Caco-2 (cell line): ENCODE measurements at regions of chr11 and their contacts with region 1.

Region 1: DNA sequence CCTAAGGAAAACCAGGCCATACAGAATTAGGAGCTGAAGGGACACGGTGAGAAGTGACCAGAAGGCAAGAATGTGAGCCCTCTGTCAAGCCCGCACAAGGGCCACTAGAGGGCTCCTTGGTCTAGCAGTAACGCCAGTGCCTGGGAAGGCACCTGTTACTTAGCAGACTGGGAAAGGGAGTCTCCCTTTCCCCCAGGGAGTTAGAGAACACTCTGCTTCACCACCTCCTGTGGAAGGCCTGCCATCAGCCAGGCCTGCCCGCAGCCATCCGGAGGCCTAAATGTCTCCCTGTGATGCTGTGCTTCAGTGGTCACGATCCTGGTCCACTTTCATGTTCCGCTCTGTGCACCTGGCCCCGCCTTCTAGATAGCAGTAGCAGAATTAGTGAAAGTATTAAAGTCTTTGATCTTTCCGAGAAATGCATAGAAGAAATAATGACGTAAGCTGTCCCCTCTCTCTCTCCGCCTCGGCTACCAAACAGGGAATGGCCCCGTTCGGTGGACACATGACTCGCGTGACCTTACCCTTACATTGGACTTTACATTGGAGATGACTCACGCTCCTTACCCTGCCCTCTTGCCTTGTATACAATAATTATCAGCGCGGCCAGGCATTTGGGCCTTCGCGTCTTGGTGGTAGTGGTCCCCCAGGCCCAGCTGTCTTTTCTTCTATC is 10.7 kb upstream of the GSTP1 start:
- DNase-seq: peak; percentile 89 to 91
- H3K4me3 ChIP-seq: peak overlapping the region; percentile 28
- H3K4me3 Mint-ChIP-seq: peak overlapping the region; percentile 69
- H3K27ac Mint-ChIP-seq: peak overlapping the region; percentile 91
- H3K4me1 ChIP-seq: peaks cover 20% of the 10 kb centered on the region
- H3K4me1 Mint-ChIP-seq: peaks cover 30% of the 10 kb centered on the region
- H3K27me3 ChIP-seq: no peaks in the 10 kb centered on the region
- H3K27me3 Mint-ChIP-seq: no peaks in the 10 kb centered on the region
- CTCF ChIP-seq: peak; percentile 97

Region 2: GRCh38 chr11:67332081-67332691 is 240.7 kb before region 1 on chr11:
- CTCF ChIA-PET with region 1: no interaction called
- POLR2A ChIA-PET with region 1: no interaction called
- intact Hi-C with region 1: no loop called
- DNase-seq: no peak
- H3K4me3 ChIP-seq: no peak overlapping the region
- H3K4me3 Mint-ChIP-seq: no peak overlapping the region
- H3K27ac Mint-ChIP-seq: no peak overlapping the region
- H3K4me1 ChIP-seq: no peaks in the 10 kb centered on the region
- H3K4me1 Mint-ChIP-seq: no peaks in the 10 kb centered on the region
- H3K27me3 ChIP-seq: no peaks in the 10 kb centered on the region
- H3K27me3 Mint-ChIP-seq: no peaks in the 10 kb centered on the region
- CTCF ChIP-seq: no peak

Region 3: GRCh38 chr11:67523556-67524479 is 49.1 kb before region 1 on chr11:
- CTCF ChIA-PET with region 1: no interaction called
- POLR2A ChIA-PET with region 1: no interaction called
- intact Hi-C with region 1: no loop called
- DNase-seq: peak in 1 of 2 experiments; percentile 41
- H3K4me3 ChIP-seq: no peak overlapping the region
- H3K4me3 Mint-ChIP-seq: no peak overlapping the region
- H3K27ac Mint-ChIP-seq: no peak overlapping the region
- H3K4me1 ChIP-seq: no peaks in the 10 kb centered on the region
- H3K4me1 Mint-ChIP-seq: no peaks in the 10 kb centered on the region
- H3K27me3 ChIP-seq: no peaks in the 10 kb centered on the region
- H3K27me3 Mint-ChIP-seq: no peaks in the 10 kb centered on the region
- CTCF ChIP-seq: peak in 1 of 2 experiments; percentile 15

Region 4: DNA sequence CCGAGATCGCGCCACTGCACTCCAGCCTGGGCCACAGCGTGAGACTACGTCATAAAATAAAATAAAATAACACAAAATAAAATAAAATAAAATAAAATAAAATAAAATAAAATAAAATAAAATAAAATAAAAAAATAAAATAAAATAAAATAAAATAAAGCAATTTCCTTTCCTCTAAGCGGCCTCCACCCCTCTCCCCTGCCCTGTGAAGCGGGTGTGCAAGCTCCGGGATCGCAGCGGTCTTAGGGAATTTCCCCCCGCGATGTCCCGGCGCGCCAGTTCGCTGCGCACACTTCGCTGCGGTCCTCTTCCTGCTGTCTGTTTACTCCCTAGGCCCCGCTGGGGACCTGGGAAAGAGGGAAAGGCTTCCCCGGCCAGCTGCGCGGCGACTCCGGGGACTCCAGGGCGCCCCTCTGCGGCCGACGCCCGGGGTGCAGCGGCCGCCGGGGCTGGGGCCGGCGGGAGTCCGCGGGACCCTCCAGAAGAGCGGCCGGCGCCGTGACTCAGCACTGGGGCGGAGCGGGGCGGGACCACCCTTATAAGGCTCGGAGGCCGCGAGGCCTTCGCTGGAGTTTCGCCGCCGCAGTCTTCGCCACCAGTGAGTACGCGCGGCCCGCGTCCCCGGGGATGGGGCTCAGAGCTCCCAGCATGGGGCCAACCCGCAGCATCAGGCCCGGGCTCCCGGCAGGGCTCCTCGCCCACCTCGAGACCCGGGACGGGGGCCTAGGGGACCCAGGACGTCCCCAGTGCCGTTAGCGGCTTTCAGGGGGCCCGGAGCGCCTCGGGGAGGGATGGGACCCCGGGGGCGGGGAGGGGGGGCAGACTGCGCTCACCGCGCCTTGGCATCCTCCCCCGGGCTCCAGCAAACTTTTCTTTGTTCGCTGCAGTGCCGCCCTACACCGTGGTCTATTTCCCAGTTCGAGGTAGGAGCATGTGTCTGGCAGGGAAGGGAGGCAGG is 10.6 kb after region 1 on chr11 and contains the start of gene GSTP1:
- CTCF ChIA-PET with region 1: interaction called, 35 read pairs
- POLR2A ChIA-PET with region 1: interaction called, 16 read pairs
- intact Hi-C with region 1: loop called (anchors 1 kb)
- DNase-seq: peak; percentile 93 to 98
- H3K4me3 ChIP-seq: peak within 1 kb of the TSS; percentile 87
- H3K4me3 Mint-ChIP-seq: peak within 1 kb of the TSS; percentile 75
- H3K27ac Mint-ChIP-seq: peak within 1 kb of the TSS; percentile 85
- H3K4me1 ChIP-seq: peaks cover 48% of the 10 kb centered on the region
- H3K4me1 Mint-ChIP-seq: peaks cover 61% of the 10 kb centered on the region
- H3K27me3 ChIP-seq: no peaks in the 10 kb centered on the region
- H3K27me3 Mint-ChIP-seq: no peaks in the 10 kb centered on the region
- CTCF ChIP-seq: peak; percentile 62 to 93
- total RNA-seq, gene GSTP1: 1,799 and 1,911 TPM in 2 replicates

Region 5: GRCh38 chr11:67606492-67607201 is 33.8 kb after region 1 on chr11 and contains the start of gene NDUFV1:
- CTCF ChIA-PET with region 1: interaction called, 3 read pairs
- POLR2A ChIA-PET with region 1: no interaction called
- intact Hi-C with region 1: loop called (anchors 1 kb)
- DNase-seq: peak; percentile 98 to 100
- H3K4me3 ChIP-seq: peak within 1 kb of the TSS; percentile 80
- H3K4me3 Mint-ChIP-seq: peak within 1 kb of the TSS; percentile 82
- H3K27ac Mint-ChIP-seq: peak within 1 kb of the TSS; percentile 91
- H3K4me1 ChIP-seq: peaks cover 10% of the 10 kb centered on the region; the same call in 1 of the 2 replicates
- H3K4me1 Mint-ChIP-seq: no peaks in the 10 kb centered on the region
- H3K27me3 ChIP-seq: no peaks in the 10 kb centered on the region
- H3K27me3 Mint-ChIP-seq: no peaks in the 10 kb centered on the region
- CTCF ChIP-seq: peak; percentile 86 to 88
- total RNA-seq, gene NDUFV1: 358 and 375 TPM in 2 replicates

Region 6: GRCh38 chr11:67613960-67614715 is 41.3 kb after region 1 on chr11:
- CTCF ChIA-PET with region 1: interaction called, 5 read pairs
- POLR2A ChIA-PET with region 1: interaction called, 4 read pairs
- intact Hi-C with region 1: loop called (anchors 2 kb)
- DNase-seq: peak; percentile 74 to 85
- H3K4me3 ChIP-seq: no peak overlapping the region
- H3K4me3 Mint-ChIP-seq: no peak overlapping the region
- H3K27ac Mint-ChIP-seq: no peak overlapping the region
- H3K4me1 ChIP-seq: no peaks in the 10 kb centered on the region
- H3K4me1 Mint-ChIP-seq: peaks cover 6% of the 10 kb centered on the region
- H3K27me3 ChIP-seq: no peaks in the 10 kb centered on the region
- H3K27me3 Mint-ChIP-seq: no peaks in the 10 kb centered on the region
- CTCF ChIP-seq: peak; percentile 89 to 92

Region 7: DNA sequence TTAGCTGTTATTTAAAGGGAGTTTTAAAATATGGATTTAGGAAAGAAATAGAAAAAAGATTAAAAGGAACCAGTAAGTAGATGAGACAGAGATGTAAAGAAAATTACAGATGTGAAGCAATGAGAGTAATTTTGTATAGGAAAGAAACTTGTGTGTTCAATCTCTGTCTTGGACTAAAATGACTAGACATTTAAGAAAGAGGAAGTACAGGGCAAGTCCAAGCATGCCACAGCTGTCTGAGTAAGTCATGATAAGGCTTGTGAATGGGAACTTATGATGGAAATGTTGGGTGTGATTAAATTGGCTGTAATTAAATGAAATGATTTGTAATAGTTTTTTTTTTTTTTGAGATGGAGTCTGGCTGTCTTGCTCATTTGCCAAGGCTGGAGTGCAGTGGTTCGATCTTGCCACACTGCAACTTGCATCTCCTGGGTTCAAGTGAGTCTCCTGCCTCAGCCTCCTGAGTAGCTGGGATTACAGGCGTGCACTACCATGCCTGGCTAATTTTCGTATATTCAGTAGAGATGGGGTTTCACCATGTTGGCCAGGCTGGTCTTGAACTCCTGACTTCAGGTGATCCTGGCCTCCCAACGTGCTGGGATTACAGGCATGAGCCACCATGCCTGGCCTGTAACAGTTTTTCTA is 83.5 kb after region 1 on chr11:
- CTCF ChIA-PET with region 1: interaction called, 4 read pairs
- POLR2A ChIA-PET with region 1: no interaction called
- intact Hi-C with region 1: loop called (anchors 2 kb)
- DNase-seq: peak in 1 of 2 experiments; percentile 8
- H3K4me3 ChIP-seq: no peak overlapping the region
- H3K4me3 Mint-ChIP-seq: no peak overlapping the region
- H3K27ac Mint-ChIP-seq: no peak overlapping the region
- H3K4me1 ChIP-seq: no peaks in the 10 kb centered on the region
- H3K4me1 Mint-ChIP-seq: peaks cover 8% of the 10 kb centered on the region
- H3K27me3 ChIP-seq: no peaks in the 10 kb centered on the region
- H3K27me3 Mint-ChIP-seq: no peaks in the 10 kb centered on the region
- CTCF ChIP-seq: no peak

Region 8: GRCh38 chr11:68402355-68403031 is 829.6 kb after region 1 on chr11:
- CTCF ChIA-PET with region 1: no interaction called
- POLR2A ChIA-PET with region 1: no interaction called
- intact Hi-C with region 1: no loop called
- DNase-seq: peak in 1 of 2 experiments; percentile 38
- H3K4me3 ChIP-seq: no peak overlapping the region
- H3K4me3 Mint-ChIP-seq: no peak overlapping the region
- H3K27ac Mint-ChIP-seq: no peak overlapping the region
- H3K4me1 ChIP-seq: peaks cover 9% of the 10 kb centered on the region; the same call in 1 of the 2 replicates
- H3K4me1 Mint-ChIP-seq: peaks cover 6% of the 10 kb centered on the region
- H3K27me3 ChIP-seq: no peaks in the 10 kb centered on the region
- H3K27me3 Mint-ChIP-seq: no peaks in the 10 kb centered on the region
- CTCF ChIP-seq: no peak